Lower leg skin (tissue), 4 donors: ENCODE measurements at regions of chr2 and their contacts with region 1.

Region 1: GRCh38 chr2:82275599-82275998 is 1971.0 kb upstream of the LRRTM1 start:
- DNase-seq: no peak
- H3K4me3 ChIP-seq: no peak overlapping the region
- CTCF ChIP-seq: no peak
- POLR2A ChIP-seq: no peak

Region 2: DNA sequence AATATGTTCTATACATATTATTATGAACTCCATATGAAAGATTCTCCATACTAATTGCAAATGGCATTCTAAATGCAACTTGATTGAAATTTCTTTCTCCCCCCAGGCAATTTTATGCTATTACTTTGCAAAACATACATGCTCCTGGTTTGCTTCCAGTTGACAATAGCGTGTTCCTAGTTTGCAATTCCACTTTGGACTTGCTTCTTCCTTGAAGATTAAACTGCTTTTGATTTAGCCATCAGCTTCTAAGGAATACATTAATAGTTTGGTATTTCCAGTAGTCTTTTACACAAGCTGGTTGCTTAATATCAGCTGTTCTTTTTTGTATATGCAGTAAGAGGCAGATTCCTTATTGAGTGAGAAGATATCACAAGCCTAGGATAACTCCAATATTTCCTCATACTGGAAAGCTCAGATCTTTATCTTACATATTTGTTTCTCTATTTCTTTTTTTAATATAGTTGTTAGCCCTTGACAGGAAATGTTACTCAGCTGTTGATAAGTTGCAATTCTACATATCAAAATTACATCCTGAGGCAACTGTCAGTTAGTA is 29.3 kb before region 1 on chr2:
- intact Hi-C with region 1: loop called (anchors 2 kb)
- DNase-seq: no peak
- H3K4me3 ChIP-seq: no peak overlapping the region
- CTCF ChIP-seq: no peak
- POLR2A ChIP-seq: no peak

Region 3: GRCh38 chr2:82576656-82577055 is 301.1 kb after region 1 on chr2:
- intact Hi-C with region 1: no loop called
- DNase-seq: no peak
- H3K4me3 ChIP-seq: no peak overlapping the region
- CTCF ChIP-seq: no peak
- POLR2A ChIP-seq: no peak